AG04450 (cell line): ENCODE measurements at regions of chr14 and their contacts with region 1.

Region 1: GRCh38 chr14:37985826-37986470 is 221.8 kb upstream of the SSTR1 start:
- DNase-seq: peak; percentile 11
- H3K4me3 ChIP-seq: no peak overlapping the region
- H3K27ac ChIP-seq: no peak overlapping the region
- H3K27me3 ChIP-seq: no peaks in the 10 kb centered on the region
- CTCF ChIP-seq: peak; percentile 82

Region 2: DNA sequence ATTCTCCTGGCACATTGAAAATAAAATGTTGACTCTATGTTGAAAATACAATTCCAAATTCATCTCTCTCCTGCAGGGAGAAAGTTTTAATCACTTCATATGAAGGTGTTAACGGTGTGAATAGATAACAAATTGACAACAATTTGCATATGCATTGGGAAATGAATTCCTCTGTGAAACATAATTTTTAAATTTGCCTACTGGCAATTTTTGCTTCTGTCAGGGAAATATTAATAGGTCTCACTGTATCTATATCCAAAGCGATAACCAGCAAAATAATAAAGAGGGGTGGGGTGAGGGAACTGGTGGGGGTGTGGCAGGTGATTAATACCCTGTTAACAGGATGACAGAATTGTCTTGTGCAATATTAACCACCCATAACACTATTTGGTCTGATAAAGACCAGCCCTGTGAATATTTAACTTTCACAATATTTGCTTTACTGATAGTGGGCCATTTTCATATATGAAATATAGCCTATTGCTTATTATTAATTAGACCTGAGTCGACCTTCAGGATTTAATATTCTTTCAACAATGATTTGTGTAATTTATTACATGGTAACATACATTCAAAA is 17.2 kb before region 1 on chr14:
- CTCF ChIA-PET with region 1: no interaction called
- POLR2A ChIA-PET with region 1: no interaction called
- DNase-seq: no peak
- H3K4me3 ChIP-seq: no peak overlapping the region
- H3K27ac ChIP-seq: no peak overlapping the region
- H3K27me3 ChIP-seq: no peaks in the 10 kb centered on the region
- CTCF ChIP-seq: no peak

Region 3: DNA sequence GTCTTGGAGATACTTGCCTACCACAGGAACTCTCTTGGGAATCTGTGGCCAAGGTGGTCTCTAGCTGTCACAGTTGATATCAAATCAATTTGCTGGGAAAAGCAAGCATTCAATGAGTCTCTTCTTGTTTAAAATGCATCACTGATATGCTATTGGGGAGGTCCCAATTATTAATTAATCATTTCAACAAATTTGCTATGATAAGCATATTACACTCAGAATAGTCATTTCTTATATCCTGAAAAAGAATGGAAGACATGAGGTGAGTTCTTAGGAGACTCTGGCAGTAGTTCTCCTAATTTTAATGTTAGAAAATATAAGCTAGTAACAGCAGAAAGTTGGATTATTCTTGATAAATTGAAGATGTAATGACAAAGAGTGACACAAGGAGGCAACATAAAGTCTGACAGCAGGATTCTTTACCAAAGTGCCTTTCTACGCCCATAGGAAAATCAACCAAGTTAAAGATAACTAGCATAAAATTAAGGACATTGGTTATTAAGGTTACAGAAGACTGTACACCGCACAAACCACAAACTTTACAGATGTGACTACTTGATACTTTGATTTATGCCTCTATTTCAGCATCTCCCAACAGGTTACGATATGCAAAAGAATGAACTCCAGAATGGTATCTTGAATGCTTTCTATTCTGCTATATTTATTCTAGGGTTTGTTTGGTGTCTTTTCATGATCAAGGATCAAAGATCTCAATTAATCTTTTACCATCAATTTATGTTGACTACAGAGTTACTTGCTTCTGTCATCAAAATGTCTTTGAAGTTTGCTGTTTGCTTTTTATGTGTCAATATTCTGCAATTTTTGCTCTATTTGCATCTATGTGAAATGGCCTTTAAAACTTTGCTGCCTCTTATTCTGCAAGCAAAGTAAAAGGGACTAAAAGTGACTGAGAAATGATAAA is 619.5 kb after region 1 on chr14:
- CTCF ChIA-PET with region 1: interaction called, 13 read pairs
- POLR2A ChIA-PET with region 1: no interaction called
- DNase-seq: no peak
- H3K4me3 ChIP-seq: no peak overlapping the region
- H3K27ac ChIP-seq: no peak overlapping the region
- H3K27me3 ChIP-seq: no peaks in the 10 kb centered on the region
- CTCF ChIP-seq: 0 out of 2 replicates have a peak, but pooled peaks have one; percentile 1